Common myeloid progenitor, CD34-positive (primary cell): ENCODE measurements at regions of chr1 and their contacts with region 1.

Region 1: GRCh38 chr1:186985889-186986491 is 157.2 kb downstream of the PLA2G4A start:
- DNase-seq: peak; percentile 66 to 80 (median 72)
- H3K4me3 ChIP-seq: no peak overlapping the region
- H3K27ac ChIP-seq: no peak overlapping the region
- H3K4me1 ChIP-seq: no peaks in the 10 kb centered on the region
- H3K27me3 ChIP-seq: no peaks in the 10 kb centered on the region

Region 2: GRCh38 chr1:186482661-186483255 is 503.2 kb before region 1 on chr1:
- CTCF ChIA-PET with region 1: interaction called, 12 read pairs
- POLR2A ChIA-PET with region 1: no interaction called
- DNase-seq: peak; percentile 71 to 79 (median 72)
- H3K4me3 ChIP-seq: no peak overlapping the region
- H3K27ac ChIP-seq: no peak overlapping the region
- H3K4me1 ChIP-seq: no peaks in the 10 kb centered on the region
- H3K27me3 ChIP-seq: no peaks in the 10 kb centered on the region

Region 3: DNA sequence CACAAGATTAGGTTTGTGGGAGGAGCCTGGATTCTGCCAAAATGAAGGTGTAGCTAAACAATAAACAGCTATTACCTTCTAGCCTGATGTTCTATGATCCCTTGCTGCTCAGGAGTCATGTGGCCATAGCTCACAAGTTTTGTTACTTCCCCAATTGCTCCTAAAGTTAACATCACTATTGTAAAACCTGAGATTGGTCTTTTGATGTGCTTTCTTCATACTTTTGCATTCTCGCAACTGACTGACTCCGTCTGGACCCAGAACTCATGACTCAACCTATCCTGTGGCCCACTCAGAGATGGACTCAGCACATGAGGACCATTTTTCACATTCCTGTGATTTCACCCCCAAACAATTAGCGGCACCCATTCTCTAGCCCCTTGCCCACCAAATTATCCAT is 374.8 kb before region 1 on chr1:
- CTCF ChIA-PET with region 1: interaction called, 30 read pairs
- POLR2A ChIA-PET with region 1: no interaction called
- DNase-seq: peak in 2 of 3 donors; percentile 16 to 23
- H3K4me3 ChIP-seq: no peak overlapping the region
- H3K27ac ChIP-seq: no peak overlapping the region
- H3K4me1 ChIP-seq: peaks cover 0 to 4% (median under 1%) of the 10 kb centered on the region in 4 experiments
- H3K27me3 ChIP-seq: no peaks in the 10 kb centered on the region